ENCODE measurements at regions of chr14 and their contacts with region 1.

Region 1: DNA sequence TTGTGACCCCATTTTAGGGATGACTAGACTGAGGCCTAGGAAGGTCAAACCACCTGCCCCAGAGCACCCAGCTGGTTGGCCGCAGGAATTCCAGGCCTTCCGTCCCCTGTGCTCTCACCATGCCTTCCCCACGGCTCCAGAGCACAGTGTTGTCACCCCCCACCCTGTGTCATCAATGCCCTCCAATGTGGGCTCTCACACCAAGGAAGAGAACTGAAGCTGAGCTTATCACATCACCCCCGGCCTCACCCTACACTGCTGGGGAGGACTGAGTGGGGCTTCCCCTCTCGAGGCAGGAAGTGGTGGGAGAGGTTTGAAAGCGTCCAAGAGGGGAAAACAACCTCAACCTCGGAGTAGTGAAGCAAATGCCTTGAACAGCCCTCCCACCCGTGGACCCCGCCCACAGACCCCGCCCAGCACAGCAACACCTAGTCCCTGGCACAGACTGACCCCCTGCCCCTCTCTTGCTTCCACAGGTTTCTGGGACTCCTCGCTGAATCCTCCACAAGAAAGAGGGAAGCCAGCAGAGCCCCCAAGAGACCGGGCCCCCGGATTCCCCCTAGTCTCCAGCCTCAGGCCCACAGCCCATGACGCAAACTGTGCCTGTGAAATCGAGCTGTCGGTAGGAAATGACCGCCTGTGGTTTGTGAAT is 97.2 kb downstream of the LGMN start:
- DNase-seq: no peak
- H3K4me3 ChIP-seq: no peak overlapping the region
- CTCF ChIP-seq: no peak

Region 2: GRCh38 chr14:92540472-92541053 is 110.7 kb before region 1 on chr14:
- in situ Hi-C with region 1: no loop called
- DNase-seq: peak; percentile 99
- H3K4me3 ChIP-seq: no peak overlapping the region
- CTCF ChIP-seq: no peak

Region 3: GRCh38 chr14:92563359-92563758 is 87.9 kb before region 1 on chr14:
- in situ Hi-C with region 1: loop called (anchors 5 kb)
- DNase-seq: no peak
- H3K4me3 ChIP-seq: no peak overlapping the region
- CTCF ChIP-seq: no peak

Region 4: GRCh38 chr14:92585981-92586937 is 65.0 kb before region 1 on chr14:
- in situ Hi-C with region 1: no loop called
- DNase-seq: peak; percentile 96
- H3K4me3 ChIP-seq: no peak overlapping the region
- CTCF ChIP-seq: no peak

Region 5: GRCh38 chr14:92704036-92704804 is 53.0 kb after region 1 on chr14:
- in situ Hi-C with region 1: no loop called
- DNase-seq: no peak
- H3K4me3 ChIP-seq: no peak overlapping the region
- CTCF ChIP-seq: no peak

Region 6: GRCh38 chr14:94394581-94395207 is 1743.5 kb after region 1 on chr14:
- in situ Hi-C with region 1: no loop called
- DNase-seq: no peak
- H3K4me3 ChIP-seq: no peak overlapping the region
- CTCF ChIP-seq: no peak